ENCODE measurements at regions of chr10 and their contacts with region 1.

Region 1: DNA sequence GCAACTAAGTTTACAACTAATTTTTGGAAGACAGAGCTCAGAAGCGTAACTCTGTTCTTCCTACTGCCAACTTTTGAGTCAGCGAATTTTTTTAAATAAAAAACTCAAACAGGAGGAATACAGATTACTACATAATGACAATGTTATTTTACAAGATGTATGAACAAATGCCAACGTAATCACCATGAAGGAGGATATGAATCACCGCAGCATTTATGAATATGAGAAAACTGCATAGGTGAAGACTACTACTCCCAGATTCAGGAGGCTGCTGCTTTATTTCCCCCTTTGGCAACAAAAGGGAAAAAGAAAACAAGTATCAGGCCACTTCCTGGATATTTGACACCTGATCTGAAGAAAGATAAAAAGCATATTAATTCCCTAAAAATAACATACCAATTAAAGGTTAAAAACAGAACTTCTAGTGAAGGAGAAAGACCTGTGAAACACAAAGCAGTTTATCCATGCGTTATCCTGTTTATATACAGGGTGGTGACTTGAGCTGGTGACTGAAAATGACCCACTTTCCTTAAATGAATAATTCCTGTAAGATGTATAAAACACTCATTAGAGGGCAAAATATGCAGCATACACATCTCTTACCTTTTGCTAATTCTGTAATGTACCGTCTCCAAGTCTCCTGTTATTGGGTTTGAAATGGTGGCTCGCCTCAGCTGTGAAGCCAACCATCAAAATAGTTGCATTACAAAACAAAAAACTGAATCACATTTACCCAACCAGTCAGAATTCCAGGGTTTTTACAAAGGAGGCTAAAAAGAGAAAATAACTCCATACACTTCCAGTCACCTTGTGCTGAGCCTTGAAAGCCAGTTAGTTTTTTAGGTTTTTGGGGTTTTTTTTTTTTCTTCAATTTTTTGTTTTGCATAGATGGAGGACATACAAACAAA is 52.0 kb downstream of the P4HA1 start:
- DNase-seq: peak; percentile 19 to 95
- H3K4me3 ChIP-seq: peak overlapping the region; percentile 3; the same call in 1 of the 2 replicates
- H3K27ac ChIP-seq: peak overlapping the region; percentile 90
- H3K4me1 ChIP-seq: peaks cover 40% of the 10 kb centered on the region
- H3K27me3 ChIP-seq: no peaks in the 10 kb centered on the region
- CTCF ChIP-seq: no peak

Region 2: DNA sequence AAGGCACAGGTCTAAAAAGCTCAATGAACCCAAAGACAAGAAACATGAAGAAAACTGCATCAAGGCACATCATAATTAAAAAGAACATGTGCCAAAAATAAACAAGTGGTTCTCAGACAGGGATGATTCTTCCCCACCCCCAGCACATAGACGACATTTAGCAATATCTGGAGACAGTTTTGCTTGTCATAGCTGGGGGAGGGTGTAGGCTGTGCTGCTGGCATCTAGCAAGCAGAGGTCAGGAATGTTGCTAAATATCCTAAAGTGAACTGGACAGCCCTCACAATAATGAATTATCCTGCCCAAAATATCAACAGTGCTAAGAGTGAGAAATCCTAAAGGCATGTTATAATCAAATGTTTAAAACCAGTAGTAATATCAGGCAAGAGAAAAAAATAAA is 541.4 kb before region 1 on chr10:
- CTCF ChIA-PET with region 1: no interaction called
- POLR2A ChIA-PET with region 1: interaction called, 12 read pairs
- intact Hi-C with region 1: no loop called
- DNase-seq: no peak
- H3K4me3 ChIP-seq: no peak overlapping the region
- H3K27ac ChIP-seq: no peak overlapping the region
- H3K4me1 ChIP-seq: peaks cover 7% of the 10 kb centered on the region; the same call in 1 of the 2 replicates
- H3K27me3 ChIP-seq: no peaks in the 10 kb centered on the region
- CTCF ChIP-seq: no peak

Region 3: GRCh38 chr10:73019100-73019499 is 25.5 kb before region 1 on chr10:
- CTCF ChIA-PET with region 1: no interaction called
- POLR2A ChIA-PET with region 1: interaction called, 11 read pairs
- intact Hi-C with region 1: no loop called
- DNase-seq: peak in 1 of 2 experiments; percentile 38
- H3K4me3 ChIP-seq: no peak overlapping the region
- H3K27ac ChIP-seq: no peak overlapping the region
- H3K4me1 ChIP-seq: peaks cover 7% of the 10 kb centered on the region; the same call in 1 of the 2 replicates
- H3K27me3 ChIP-seq: no peaks in the 10 kb centered on the region
- CTCF ChIP-seq: no peak

Measured in PC-9 (cell line).